Common myeloid progenitor, CD34-positive (primary cell): ENCODE measurements at regions of chr1 and their contacts with region 1.

Region 1: DNA sequence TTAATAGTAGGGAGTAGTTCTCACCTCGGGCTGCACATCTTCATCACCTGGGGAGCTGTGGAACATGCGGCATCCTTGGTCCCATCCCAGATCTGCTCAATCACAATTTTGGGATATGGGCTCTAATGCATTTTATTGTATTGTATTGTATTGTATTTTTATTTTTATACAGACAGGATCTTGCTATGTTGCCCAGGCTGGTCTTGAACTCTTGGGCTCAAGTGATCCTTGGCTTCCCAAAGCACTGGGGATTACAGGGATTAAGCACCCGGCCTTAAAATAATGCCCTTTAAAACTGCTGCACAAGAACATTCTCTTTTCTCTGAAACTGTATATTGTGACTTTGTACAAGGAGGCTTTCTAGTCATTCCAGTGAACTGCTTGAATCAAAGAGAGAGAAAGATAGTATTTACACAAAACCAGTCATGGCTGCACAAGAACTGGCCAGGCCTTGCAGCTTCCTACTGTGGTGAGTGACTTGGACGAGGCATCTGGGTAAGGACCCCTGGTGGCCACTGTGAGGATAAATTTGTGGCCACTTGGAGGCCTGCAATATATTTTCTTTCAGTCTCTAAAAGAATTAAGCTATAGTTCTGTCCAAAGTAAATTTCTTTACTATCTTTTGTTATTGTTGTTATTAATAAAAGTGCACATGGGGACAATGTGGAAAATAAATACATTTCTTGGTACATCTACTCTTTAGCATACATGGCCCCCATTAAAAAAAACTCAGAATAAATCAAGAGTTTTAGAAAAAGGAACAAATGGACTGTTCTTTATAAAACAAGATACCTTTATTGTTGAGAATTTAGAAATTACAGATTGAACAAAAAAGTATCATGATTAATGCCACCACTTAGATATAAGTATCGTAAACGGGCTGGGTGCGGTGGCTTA is 48.0 kb downstream of the TBCE start:
- DNase-seq: peak; percentile 78 to 91 (median 90)
- H3K4me3 ChIP-seq: no peak overlapping the region
- H3K27ac ChIP-seq: no peak overlapping the region
- H3K4me1 ChIP-seq: peaks cover 0 to 4% (median 0%) of the 10 kb centered on the region in 4 experiments
- H3K27me3 ChIP-seq: no peaks in the 10 kb centered on the region

Region 2: DNA sequence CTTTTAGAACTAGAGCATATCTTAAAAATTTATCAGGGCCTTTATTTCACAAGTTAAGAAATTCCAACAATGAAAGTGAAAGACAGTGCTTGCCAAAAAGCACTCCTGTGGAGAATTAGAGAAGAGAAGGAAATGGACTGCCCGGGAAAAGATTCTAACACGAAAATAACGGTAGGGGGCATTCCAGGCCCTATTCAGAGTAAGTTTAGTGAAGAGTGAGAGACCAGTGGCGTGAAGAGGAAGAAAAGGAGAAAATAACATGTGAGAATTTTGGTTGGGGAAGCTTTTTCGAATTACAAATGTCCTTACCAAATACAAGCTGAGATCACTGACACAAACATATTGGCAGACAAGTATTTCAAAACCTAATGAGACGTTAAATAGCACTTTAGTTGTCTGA is 215.8 kb before region 1 on chr1:
- CTCF ChIA-PET with region 1: interaction called, 16 read pairs
- POLR2A ChIA-PET with region 1: no interaction called
- DNase-seq: peak; percentile 34 to 59 (median 55)
- H3K4me3 ChIP-seq: no peak overlapping the region
- H3K27ac ChIP-seq: no peak overlapping the region
- H3K4me1 ChIP-seq: no peaks in the 10 kb centered on the region
- H3K27me3 ChIP-seq: no peaks in the 10 kb centered on the region

Region 3: GRCh38 chr1:235239851-235240250 is 175.4 kb before region 1 on chr1:
- CTCF ChIA-PET with region 1: interaction called, 13 read pairs
- POLR2A ChIA-PET with region 1: no interaction called
- DNase-seq: peak; percentile 17 to 59 (median 48)
- H3K4me3 ChIP-seq: no peak overlapping the region
- H3K27ac ChIP-seq: peak overlapping the region in 1 of 2 experiments; percentile 60
- H3K4me1 ChIP-seq: peaks cover 11 to 21% (median 16%) of the 10 kb centered on the region in 4 experiments
- H3K27me3 ChIP-seq: no peaks in the 10 kb centered on the region

Region 4: DNA sequence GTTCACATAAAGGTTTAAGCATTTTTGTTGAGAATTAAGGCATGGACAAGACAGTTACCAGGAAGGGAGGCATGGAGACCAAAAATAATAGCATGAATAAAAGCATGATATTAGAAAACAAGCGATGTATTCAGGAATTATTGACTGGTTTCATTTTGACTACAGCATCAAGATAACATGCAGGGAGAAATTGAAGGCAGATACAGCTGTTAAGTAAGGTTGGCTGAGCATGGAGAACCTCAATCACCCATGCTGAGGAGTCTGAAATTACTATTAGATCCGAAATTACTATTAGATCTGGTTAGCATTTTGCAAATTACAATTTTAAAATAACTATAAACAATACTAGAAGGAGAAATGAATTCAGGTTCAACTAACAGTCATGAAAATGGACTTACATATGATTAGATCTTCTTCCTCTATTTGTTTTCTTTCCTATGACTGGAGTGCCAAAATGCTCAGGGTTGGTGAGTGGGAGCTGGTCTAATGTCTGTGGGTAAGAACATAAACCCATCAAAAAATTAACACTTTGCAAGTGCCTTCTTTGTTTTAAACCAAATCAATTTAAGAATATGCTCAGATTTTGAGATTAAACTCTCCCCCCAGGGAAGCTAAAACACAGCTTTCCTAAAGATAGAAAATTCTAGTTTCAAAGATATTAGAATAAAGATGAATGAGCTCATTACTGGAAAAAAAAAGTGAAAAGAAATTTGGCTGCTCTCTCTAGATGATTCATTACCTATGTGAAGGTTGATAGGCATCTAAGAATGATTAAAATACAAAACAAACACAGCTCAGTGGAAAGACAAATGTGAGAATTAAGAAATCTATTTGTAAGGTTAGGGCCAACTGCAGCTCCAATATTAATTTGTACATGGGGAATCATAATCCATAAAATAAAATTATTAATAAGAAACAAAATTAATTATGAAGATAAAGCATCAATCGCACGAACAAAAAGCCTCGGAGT is 168.9 kb before region 1 on chr1:
- CTCF ChIA-PET with region 1: interaction called, 38 read pairs
- POLR2A ChIA-PET with region 1: no interaction called
- DNase-seq: peak in 1 of 3 donors; percentile 31
- H3K4me3 ChIP-seq: no peak overlapping the region
- H3K27ac ChIP-seq: peak overlapping the region in 1 of 2 experiments; percentile 2
- H3K4me1 ChIP-seq: peaks cover 6 to 18% (median 15%) of the 10 kb centered on the region in 4 experiments
- H3K27me3 ChIP-seq: no peaks in the 10 kb centered on the region

Region 5: GRCh38 chr1:235253219-235253962 is 161.9 kb before region 1 on chr1:
- CTCF ChIA-PET with region 1: interaction called, 38 read pairs
- POLR2A ChIA-PET with region 1: no interaction called
- DNase-seq: peak; percentile 72 to 79 (median 75)
- H3K4me3 ChIP-seq: no peak overlapping the region
- H3K27ac ChIP-seq: no peak overlapping the region
- H3K4me1 ChIP-seq: peaks cover 0 to 5% (median under 1%) of the 10 kb centered on the region in 4 experiments
- H3K27me3 ChIP-seq: no peaks in the 10 kb centered on the region

Region 6: DNA sequence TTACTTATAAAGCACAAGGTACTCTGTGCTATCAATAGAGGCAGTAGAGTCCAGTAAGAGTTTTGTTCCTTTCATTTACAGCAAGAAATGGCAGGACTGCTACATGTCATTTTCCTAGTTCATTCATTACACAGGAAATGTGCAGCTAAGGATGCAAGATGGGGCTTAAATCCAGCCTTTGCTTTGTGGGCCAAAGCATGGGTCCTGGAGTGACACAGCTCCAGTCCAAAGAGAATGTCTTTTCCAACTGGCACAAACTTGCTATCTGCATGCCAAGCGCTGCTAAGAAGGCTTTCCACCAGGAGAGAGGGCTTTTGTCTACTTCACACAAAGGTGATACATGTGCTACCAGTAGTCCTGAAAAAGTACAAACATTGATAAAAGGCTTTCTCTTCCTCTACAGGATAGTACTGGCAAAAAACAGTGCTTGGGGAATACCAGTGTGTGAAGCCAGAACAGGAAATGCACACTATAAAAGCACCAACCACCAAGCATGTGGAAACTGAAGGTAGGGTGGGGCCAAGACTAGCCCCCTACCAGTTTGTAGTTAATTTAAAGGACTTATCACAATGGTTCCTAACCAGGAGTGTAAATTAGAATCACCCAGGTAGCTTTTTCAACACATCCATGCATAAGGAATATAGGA is 156.0 kb before region 1 on chr1:
- CTCF ChIA-PET with region 1: interaction called, 10 read pairs
- POLR2A ChIA-PET with region 1: no interaction called
- DNase-seq: peak in 1 of 3 donors; percentile 32
- H3K4me3 ChIP-seq: peak overlapping the region in 1 of 7 experiments; percentile 24
- H3K27ac ChIP-seq: peak overlapping the region in 1 of 2 experiments; percentile 29
- H3K4me1 ChIP-seq: peaks cover 2 to 18% (median 13%) of the 10 kb centered on the region in 4 experiments
- H3K27me3 ChIP-seq: no peaks in the 10 kb centered on the region

Region 7: DNA sequence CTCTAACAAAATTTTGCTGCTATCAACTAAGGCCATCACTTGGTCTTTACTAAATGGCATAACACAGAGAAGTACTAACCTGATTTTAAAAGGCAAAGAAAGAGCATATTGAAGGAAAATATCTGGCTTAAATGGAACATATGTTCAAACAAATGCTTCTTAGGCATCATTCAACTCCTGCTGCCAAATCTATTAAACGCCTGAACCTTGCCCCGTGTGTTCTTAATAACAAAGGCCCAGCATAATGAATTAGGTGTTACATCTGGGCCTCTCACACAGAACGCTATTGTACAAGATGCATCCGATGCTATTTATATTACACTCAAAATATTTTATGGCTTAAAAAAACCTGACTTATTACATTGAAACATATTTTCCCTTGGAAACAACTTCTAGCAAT is 40.6 kb after region 1 on chr1:
- CTCF ChIA-PET with region 1: no interaction called
- POLR2A ChIA-PET with region 1: no interaction called
- DNase-seq: no peak
- H3K4me3 ChIP-seq: no peak overlapping the region
- H3K27ac ChIP-seq: no peak overlapping the region
- H3K4me1 ChIP-seq: no peaks in the 10 kb centered on the region
- H3K27me3 ChIP-seq: no peaks in the 10 kb centered on the region

Region 8: DNA sequence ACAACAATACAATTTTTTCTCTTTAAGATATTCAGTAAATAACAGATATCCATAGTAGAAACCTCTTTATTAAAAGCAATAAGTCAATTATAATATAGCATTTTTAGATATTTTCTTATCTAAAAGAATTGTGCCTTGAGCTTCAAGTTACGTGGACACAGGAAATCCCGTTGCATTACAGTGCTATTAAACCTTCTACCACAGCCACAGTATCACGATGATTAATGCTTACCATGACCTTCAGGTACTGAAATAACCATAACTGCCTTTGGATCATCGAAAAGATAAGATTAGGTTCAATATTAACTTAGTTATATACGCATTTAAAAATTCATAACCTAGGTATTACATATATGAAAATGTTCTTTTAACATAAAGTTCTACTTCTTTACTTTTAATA is 71.1 kb after region 1 on chr1:
- CTCF ChIA-PET with region 1: no interaction called
- POLR2A ChIA-PET with region 1: no interaction called
- DNase-seq: no peak
- H3K4me3 ChIP-seq: no peak overlapping the region
- H3K27ac ChIP-seq: no peak overlapping the region
- H3K4me1 ChIP-seq: no peaks in the 10 kb centered on the region
- H3K27me3 ChIP-seq: no peaks in the 10 kb centered on the region